Activated naive CD8-positive, alpha-beta T cell treated with anti-CD3 and anti-CD28 coated beads, Interleukin-2, amount 10 ng/mL, durations not matched to agents 7 days and 5 days (primary cell): ENCODE measurements at regions of chr15 and their contacts with region 1.

Region 1: DNA sequence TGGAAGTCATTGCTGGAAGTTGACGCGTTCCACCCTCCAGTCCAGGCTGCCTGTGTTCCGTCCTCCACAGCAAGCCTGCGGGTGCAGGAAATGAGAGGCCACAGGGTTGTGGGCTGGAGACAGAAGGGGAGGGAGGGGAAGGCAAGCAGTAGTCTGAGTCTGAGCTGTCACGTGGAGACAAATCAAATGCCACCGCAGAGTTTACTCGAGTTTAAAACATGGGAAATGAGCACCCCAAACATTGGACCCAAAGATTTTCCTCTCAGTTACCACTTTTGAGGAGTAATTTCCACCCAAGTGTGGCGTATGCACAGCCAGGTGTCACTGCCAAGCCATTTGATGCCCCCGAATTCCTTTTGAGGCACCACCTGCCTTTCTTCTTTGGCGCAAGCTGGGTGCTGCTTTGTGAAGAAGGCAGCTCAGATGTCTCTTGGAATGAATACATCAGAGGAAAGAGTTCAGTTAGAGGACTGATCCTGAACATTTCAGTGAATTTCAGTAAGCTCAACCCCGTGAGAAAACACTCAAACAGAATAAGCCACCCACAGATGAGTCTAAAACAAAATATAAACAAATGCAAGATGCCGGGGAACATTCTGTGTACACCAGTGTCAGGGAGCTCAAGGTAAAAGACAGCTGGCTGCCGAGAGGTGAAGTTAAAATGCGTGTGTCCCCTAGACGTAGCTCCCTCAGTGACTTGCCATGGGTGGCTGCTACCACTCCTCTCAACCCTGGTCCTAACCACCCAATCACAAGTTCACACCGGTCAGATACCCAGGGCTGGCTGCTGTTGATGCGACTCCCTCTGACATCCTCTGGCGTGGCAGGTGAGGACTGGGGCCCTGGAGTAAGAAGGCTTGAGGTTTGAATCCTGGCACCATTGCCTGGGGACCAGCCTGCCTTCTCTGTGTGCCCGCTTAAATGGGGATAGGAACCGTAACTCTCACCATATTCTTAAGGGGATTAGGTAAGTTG is 203.8 kb downstream of the UACA start:
- DNase-seq: peak; percentile 73
- ATAC-seq: peak; percentile 94
- H3K4me3 Mint-ChIP-seq: peak overlapping the region; percentile 9
- H3K27ac Mint-ChIP-seq: peak overlapping the region; percentile 31
- H3K4me1 Mint-ChIP-seq: peaks cover 2% of the 10 kb centered on the region
- H3K27me3 Mint-ChIP-seq: peaks cover 12% of the 10 kb centered on the region

Region 2: DNA sequence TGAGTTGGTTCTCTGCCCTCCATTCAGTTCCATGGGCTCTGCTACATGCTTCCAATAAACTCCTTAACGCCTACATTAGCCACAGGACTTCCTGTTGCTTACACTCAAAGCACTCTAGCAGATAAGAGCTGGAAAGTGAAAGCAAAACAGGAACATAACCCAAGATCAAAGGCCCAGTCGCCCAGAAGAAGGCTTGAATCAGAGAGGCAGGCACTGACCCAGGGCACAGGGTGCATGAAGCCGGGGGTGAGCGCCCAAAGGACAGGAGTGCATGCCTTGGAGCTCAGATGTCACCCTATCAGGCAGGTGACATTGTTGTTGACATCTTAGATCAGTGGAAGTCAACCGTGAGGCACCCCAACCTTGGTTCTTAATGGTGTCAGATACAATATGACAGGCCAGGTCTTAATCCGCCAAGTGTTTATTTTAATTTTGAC is 31.3 kb before region 1 on chr15:
- POLR2A ChIA-PET with region 1: interaction called, 14 read pairs
- DNase-seq: peak; percentile 68
- ATAC-seq: peak; percentile 95
- H3K4me3 Mint-ChIP-seq: peak overlapping the region; percentile 74
- H3K27ac Mint-ChIP-seq: peak overlapping the region; percentile 93
- H3K4me1 Mint-ChIP-seq: peaks cover 41% of the 10 kb centered on the region
- H3K27me3 Mint-ChIP-seq: no peaks in the 10 kb centered on the region

Region 3: GRCh38 chr15:70535071-70535954 is 24.2 kb before region 1 on chr15:
- POLR2A ChIA-PET with region 1: interaction called, 48 read pairs
- DNase-seq: peak; percentile 77
- ATAC-seq: peak; percentile 87
- H3K4me3 Mint-ChIP-seq: peak overlapping the region; percentile 88
- H3K27ac Mint-ChIP-seq: peak overlapping the region; percentile 95
- H3K4me1 Mint-ChIP-seq: peaks cover 44% of the 10 kb centered on the region
- H3K27me3 Mint-ChIP-seq: no peaks in the 10 kb centered on the region

Region 4: GRCh38 chr15:70775160-70775559 is 215.6 kb after region 1 on chr15:
- POLR2A ChIA-PET with region 1: no interaction called
- DNase-seq: no peak
- ATAC-seq: no peak
- H3K4me3 Mint-ChIP-seq: no peak overlapping the region
- H3K27ac Mint-ChIP-seq: no peak overlapping the region
- H3K4me1 Mint-ChIP-seq: peaks cover 4% of the 10 kb centered on the region
- H3K27me3 Mint-ChIP-seq: peaks cover 21% of the 10 kb centered on the region